GM12878 (cell line): ENCODE measurements at regions of chr5 and their contacts with region 1.

Region 1: GRCh38 chr5:177454397-177455035 is 7.9 kb downstream of the PRR7 start:
- DNase-seq: no peak
- ATAC-seq: peak; percentile 68
- H3K4me3 ChIP-seq: peak overlapping the region; percentile 82
- H3K27ac ChIP-seq: peak overlapping the region; percentile 67
- H3K4me1 ChIP-seq: peaks cover 11% of the 10 kb centered on the region
- H3K27me3 ChIP-seq: no peaks in the 10 kb centered on the region
- CTCF ChIP-seq: peak; percentile 79 to 98 (median 87); a peak in 4 of 6 replicates
- EP300 ChIP-seq: peak; percentile 39 to 70; a peak in 3 of 4 replicates
- POLR2A ChIP-seq: no peak
- RAD21 ChIP-seq: peak; percentile 84

Region 2: GRCh38 chr5:176596689-176597416 is 857.7 kb before region 1 on chr5:
- CTCF ChIA-PET with region 1: no interaction called
- POLR2A ChIA-PET with region 1: no interaction called
- RAD21 ChIA-PET with region 1: no interaction called
- SMC1A ChIA-PET with region 1: no interaction called
- in situ Hi-C with region 1: no loop called
- intact Hi-C with region 1: no loop called
- DNase-seq: no peak
- ATAC-seq: peak; percentile 55
- H3K4me3 ChIP-seq: no peak overlapping the region
- H3K27ac ChIP-seq: no peak overlapping the region
- H3K4me1 ChIP-seq: no peaks in the 10 kb centered on the region
- H3K27me3 ChIP-seq: no peaks in the 10 kb centered on the region
- CTCF ChIP-seq: no peak; a peak in 1 of 6 replicates
- EP300 ChIP-seq: no peak
- POLR2A ChIP-seq: no peak
- RAD21 ChIP-seq: no peak

Region 3: DNA sequence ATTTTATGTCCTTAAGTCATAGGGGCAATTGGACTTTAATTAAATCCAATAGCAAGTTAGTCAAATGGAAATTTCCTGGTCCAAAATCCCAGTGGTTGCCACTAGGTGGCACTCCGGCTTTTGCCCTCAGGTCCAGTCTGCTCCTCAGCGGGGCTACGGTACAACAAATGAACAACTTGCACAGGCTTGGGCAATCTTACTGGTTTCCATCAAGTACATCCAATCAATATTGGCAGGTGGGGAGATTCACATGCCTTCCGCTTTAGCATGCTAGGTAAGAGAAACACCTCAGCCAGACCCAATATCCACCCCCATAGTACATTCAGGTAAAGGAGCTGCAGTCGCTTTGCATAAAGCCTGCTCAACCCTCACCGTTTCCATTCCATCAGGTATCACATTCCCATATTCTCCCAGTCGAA is 136.5 kb before region 1 on chr5:
- CTCF ChIA-PET with region 1: interaction called, 11 read pairs
- POLR2A ChIA-PET with region 1: interaction called, 7 read pairs
- RAD21 ChIA-PET with region 1: interaction called, 5 read pairs
- SMC1A ChIA-PET with region 1: interaction called, 8 read pairs
- in situ Hi-C with region 1: loop called (anchors 5 kb)
- intact Hi-C with region 1: loop called (anchors 1 kb)
- DNase-seq: no peak
- ATAC-seq: peak; percentile 80
- H3K4me3 ChIP-seq: no peak overlapping the region
- H3K27ac ChIP-seq: no peak overlapping the region
- H3K4me1 ChIP-seq: peaks cover 11% of the 10 kb centered on the region
- H3K27me3 ChIP-seq: no peaks in the 10 kb centered on the region
- CTCF ChIP-seq: peak; percentile 85 to 97 (median 93)
- EP300 ChIP-seq: no peak
- POLR2A ChIP-seq: no peak
- RAD21 ChIP-seq: peak; percentile 90

Region 4: DNA sequence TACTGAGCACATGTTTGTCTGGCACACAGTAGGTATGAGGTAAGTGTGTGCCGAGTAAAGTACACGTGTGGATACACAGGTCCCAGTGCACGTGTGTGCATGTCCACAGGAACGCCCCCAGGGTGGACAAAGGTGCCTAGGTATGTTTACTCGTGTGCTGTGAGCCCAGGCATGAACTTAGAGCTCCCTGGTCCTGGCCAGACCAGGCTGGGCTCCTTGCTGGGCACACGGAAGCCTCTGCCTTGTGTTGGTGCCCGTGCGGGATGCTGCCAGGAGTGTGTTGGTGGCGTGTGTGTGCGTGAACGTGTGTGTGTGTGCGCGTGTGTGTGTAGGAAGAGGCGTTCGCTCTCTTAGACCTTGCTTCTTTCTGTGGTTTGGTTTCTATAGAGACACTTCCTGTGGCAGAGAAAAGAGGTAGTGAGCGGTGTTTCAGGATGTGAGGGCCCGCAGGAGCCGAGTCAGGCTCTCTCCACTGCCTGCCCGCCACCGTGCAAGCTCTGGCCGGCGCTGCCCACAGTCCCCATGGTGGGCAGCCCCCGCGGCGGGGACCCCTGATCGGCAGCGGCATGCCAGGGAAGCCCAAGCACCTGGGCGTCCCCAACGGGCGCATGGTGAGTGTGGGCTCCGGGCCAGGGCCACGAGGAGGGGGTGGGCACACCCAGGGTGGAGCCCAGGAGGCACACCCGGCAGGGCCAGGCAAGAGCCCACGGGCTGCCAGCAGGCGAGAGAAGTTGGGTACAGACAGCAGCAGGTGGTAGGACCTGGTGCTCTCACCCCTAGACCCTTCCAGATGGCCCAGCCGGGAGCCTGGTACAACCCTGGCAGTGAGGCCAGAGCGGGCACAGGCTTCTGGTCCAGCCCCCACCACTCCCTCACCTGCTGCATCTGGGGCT is 96.8 kb before region 1 on chr5 and contains the start of gene RGS14:
- CTCF ChIA-PET with region 1: interaction called, 16 read pairs
- POLR2A ChIA-PET with region 1: no interaction called
- RAD21 ChIA-PET with region 1: interaction called, 8 read pairs
- SMC1A ChIA-PET with region 1: no interaction called
- in situ Hi-C with region 1: no loop called
- intact Hi-C with region 1: no loop called
- DNase-seq: peak; percentile 77
- ATAC-seq: peak; percentile 91
- H3K4me3 ChIP-seq: peak within 1 kb of the TSS; percentile 99
- H3K27ac ChIP-seq: peak within 1 kb of the TSS; percentile 91
- H3K4me1 ChIP-seq: peaks cover 48% of the 10 kb centered on the region
- H3K27me3 ChIP-seq: no peaks in the 10 kb centered on the region
- CTCF ChIP-seq: no peak
- EP300 ChIP-seq: peak; percentile 25 to 55; a peak in 2 of 4 replicates
- POLR2A ChIP-seq: peak; percentile 82
- RAD21 ChIP-seq: no peak
- polyA plus RNA-seq, gene RGS14: 0.19 to 1.3 TPM

Region 5: GRCh38 chr5:177425801-177426565 is 28.5 kb before region 1 on chr5:
- CTCF ChIA-PET with region 1: interaction called, 114 read pairs
- POLR2A ChIA-PET with region 1: interaction called, 358 read pairs
- RAD21 ChIA-PET with region 1: interaction called, 288 read pairs
- SMC1A ChIA-PET with region 1: interaction called, 55 read pairs
- in situ Hi-C with region 1: no loop called
- intact Hi-C with region 1: loop called (anchors 2 kb)
- DNase-seq: peak; percentile 100
- ATAC-seq: peak; percentile 81
- H3K4me3 ChIP-seq: peak overlapping the region; percentile 62; the same call in 1 of the 2 replicates
- H3K27ac ChIP-seq: peak overlapping the region; percentile 99
- H3K4me1 ChIP-seq: peaks cover 37% of the 10 kb centered on the region
- H3K27me3 ChIP-seq: no peaks in the 10 kb centered on the region
- CTCF ChIP-seq: no peak
- EP300 ChIP-seq: peak in 1 of 2 experiments; percentile 43; a peak in 1 of 4 replicates
- POLR2A ChIP-seq: no peak
- RAD21 ChIP-seq: no peak

Region 6: GRCh38 chr5:177497292-177498033 is 42.9 kb after region 1 on chr5 and contains the start of gene PDLIM7:
- CTCF ChIA-PET with region 1: interaction called, 53 read pairs
- POLR2A ChIA-PET with region 1: interaction called, 12 read pairs
- RAD21 ChIA-PET with region 1: interaction called, 40 read pairs
- SMC1A ChIA-PET with region 1: interaction called, 12 read pairs
- in situ Hi-C with region 1: no loop called
- intact Hi-C with region 1: loop called (anchors 1 kb)
- DNase-seq: peak; percentile 77
- ATAC-seq: peak; percentile 81
- H3K4me3 ChIP-seq: peak within 1 kb of the TSS; percentile 86
- H3K27ac ChIP-seq: peak within 1 kb of the TSS; percentile 74
- H3K4me1 ChIP-seq: peaks cover 42% of the 10 kb centered on the region
- H3K27me3 ChIP-seq: no peaks in the 10 kb centered on the region; a peak in 1 of 4 replicates
- CTCF ChIP-seq: 0 out of 6 replicates have a peak, but pooled peaks of 1 of the 3 experiments have one; percentile 0
- EP300 ChIP-seq: no peak
- POLR2A ChIP-seq: peak; percentile 98
- RAD21 ChIP-seq: no peak
- polyA plus RNA-seq, gene PDLIM7: 0.82 to 2.3 TPM